ENCODE measurements at regions of chr14 and their contacts with region 1.

Region 1: DNA sequence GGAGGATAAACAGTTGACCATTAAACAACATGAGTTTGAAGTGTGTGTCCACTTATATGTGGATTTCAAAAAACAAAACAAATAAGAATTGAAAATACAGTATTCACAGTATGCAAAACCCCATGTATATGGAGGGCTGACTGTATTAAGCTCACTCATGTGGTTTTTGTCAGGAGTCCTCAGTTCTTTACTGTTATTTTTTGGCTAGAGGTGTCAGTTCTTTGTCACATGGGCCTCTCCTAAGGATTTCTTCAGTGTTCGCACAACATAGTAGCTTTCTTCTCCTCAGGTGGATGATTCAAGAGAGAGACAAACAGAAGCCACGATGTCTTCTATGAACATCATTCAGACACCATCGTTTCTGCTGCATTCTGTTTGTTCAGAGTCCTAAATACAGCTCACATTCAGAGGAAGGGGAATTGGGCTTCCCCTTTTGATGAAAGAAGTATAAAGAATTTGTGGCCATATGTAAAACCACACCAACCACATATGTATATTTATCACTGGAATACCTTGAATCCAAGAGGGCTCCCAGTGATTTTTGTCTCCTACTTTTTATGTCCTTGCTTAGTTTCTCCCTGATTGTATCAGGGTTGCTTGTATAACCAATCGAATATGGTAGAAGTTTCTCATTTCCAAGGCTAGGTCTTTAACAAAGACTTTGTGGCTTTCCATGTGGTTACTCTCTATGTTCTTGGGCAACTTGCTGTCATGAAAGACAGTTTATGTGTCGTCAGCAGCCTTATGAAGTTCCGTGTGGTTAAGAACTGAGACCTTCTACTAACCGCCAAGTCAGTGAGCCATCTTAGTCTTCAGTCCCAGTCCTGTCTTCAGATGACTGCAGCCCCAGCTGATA is 18.9 kb downstream of the MNAT1 start:
- DNase-seq: peak; percentile 65
- H3K4me3 Mint-ChIP-seq: peak overlapping the region; percentile 29
- H3K27ac Mint-ChIP-seq: peak overlapping the region; percentile 66
- H3K4me1 Mint-ChIP-seq: peaks cover 29% of the 10 kb centered on the region
- H3K27me3 Mint-ChIP-seq: peaks cover 5% of the 10 kb centered on the region

Region 2: GRCh38 chr14:60734465-60735242 is 18.8 kb before region 1 on chr14 and contains the start of gene MNAT1:
- CTCF ChIA-PET with region 1: no interaction called
- POLR2A ChIA-PET with region 1: interaction called, 4 read pairs
- intact Hi-C with region 1: loop called (anchors 1 kb)
- DNase-seq: peak; percentile 85
- H3K4me3 Mint-ChIP-seq: peak within 1 kb of the TSS; percentile 95
- H3K27ac Mint-ChIP-seq: peak within 1 kb of the TSS; percentile 67
- H3K4me1 Mint-ChIP-seq: peaks cover 15% of the 10 kb centered on the region
- H3K27me3 Mint-ChIP-seq: peaks cover 16% of the 10 kb centered on the region
- total RNA-seq, gene MNAT1: 35.3 to 38.5 TPM

Region 3: DNA sequence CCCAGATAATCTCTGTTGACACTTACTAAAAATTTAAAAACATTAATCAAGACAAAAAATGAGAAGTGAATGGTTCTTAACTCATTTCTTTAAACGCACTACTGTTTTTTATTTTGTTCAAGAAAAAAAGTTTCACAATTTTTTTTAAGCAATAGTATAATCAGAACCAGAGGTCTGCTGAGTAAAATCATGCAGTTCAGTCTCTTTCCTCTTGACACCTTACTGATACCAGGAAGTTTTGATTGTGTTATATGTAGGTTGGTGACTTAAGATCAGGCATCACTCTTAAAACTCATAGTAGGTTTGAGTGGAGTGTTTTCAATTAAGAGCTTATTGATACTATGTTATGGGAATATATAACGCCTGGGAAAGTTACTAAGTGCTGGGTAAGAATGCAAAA is 106.0 kb after region 1 on chr14:
- CTCF ChIA-PET with region 1: no interaction called
- POLR2A ChIA-PET with region 1: no interaction called
- intact Hi-C with region 1: loop called (anchors 1 kb)
- DNase-seq: no peak
- H3K4me3 Mint-ChIP-seq: no peak overlapping the region
- H3K27ac Mint-ChIP-seq: no peak overlapping the region
- H3K4me1 Mint-ChIP-seq: peaks cover 22% of the 10 kb centered on the region
- H3K27me3 Mint-ChIP-seq: no peaks in the 10 kb centered on the region

Region 4: DNA sequence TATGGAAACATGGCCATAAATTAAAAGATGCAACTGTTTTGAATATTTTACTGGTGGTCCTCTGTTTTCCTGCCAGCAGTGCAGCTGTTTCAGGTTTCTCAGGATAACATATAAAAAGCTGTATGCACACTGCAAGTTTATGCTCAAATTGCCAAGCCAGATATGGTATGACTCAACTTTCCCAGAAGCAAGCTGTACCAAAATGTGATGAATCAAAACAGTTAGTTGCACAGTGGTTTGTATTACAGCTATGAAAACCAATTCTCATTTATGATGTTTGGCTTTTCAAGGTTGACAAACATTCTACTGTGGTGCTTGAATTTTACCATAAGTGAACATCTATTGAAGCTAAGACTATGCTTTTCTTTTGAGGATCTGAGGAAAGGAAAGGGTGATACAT is 211.9 kb after region 1 on chr14:
- CTCF ChIA-PET with region 1: no interaction called
- POLR2A ChIA-PET with region 1: no interaction called
- intact Hi-C with region 1: loop called (anchors 1 kb)
- DNase-seq: no peak
- H3K4me3 Mint-ChIP-seq: no peak overlapping the region
- H3K27ac Mint-ChIP-seq: peak overlapping the region; percentile 39
- H3K4me1 Mint-ChIP-seq: peaks cover 8% of the 10 kb centered on the region
- H3K27me3 Mint-ChIP-seq: no peaks in the 10 kb centered on the region